ENCODE measurements at regions of chr4 and their contacts with region 1.

Region 1: GRCh38 chr4:88514557-88515511 is 8.7 kb downstream of the PYURF start:
- DNase-seq: peak; percentile 76
- ATAC-seq: peak; percentile 92
- H3K4me3 ChIP-seq: no peak overlapping the region
- H3K27ac ChIP-seq: no peak overlapping the region
- H3K4me1 ChIP-seq: peaks cover 18% of the 10 kb centered on the region
- H3K27me3 ChIP-seq: peaks cover 0 to 2% of the 10 kb centered on the region in 2 experiments; a peak in 1 of 5 replicates
- CTCF ChIP-seq: no peak
- EP300 ChIP-seq: peak in 1 of 2 experiments; percentile 68; a peak in 2 of 4 replicates
- POLR2A ChIP-seq: no peak
- RAD21 ChIP-seq: no peak

Region 2: GRCh38 chr4:88033309-88033708 is 481.5 kb before region 1 on chr4:
- CTCF ChIA-PET with region 1: interaction called, 8 read pairs
- POLR2A ChIA-PET with region 1: no interaction called
- in situ Hi-C with region 1: loop called (anchors 10 kb)
- intact Hi-C with region 1: loop called (anchors 1 kb)
- DNase-seq: peak; percentile 71
- ATAC-seq: peak; percentile 61
- H3K4me3 ChIP-seq: no peak overlapping the region
- H3K27ac ChIP-seq: no peak overlapping the region
- H3K4me1 ChIP-seq: no peaks in the 10 kb centered on the region
- H3K27me3 ChIP-seq: no peaks in the 10 kb centered on the region
- CTCF ChIP-seq: peak; percentile 73
- EP300 ChIP-seq: no peak
- POLR2A ChIP-seq: no peak
- RAD21 ChIP-seq: peak; percentile 69; the same call in 1 of the 2 replicates

Region 3: GRCh38 chr4:88104902-88105610 is 409.8 kb before region 1 on chr4:
- CTCF ChIA-PET with region 1: no interaction called
- POLR2A ChIA-PET with region 1: no interaction called
- in situ Hi-C with region 1: no loop called
- intact Hi-C with region 1: loop called (anchors 5 kb)
- DNase-seq: no peak
- ATAC-seq: no peak
- H3K4me3 ChIP-seq: no peak overlapping the region
- H3K27ac ChIP-seq: peak overlapping the region; percentile 18
- H3K4me1 ChIP-seq: peaks cover 56% of the 10 kb centered on the region
- H3K27me3 ChIP-seq: no peaks in the 10 kb centered on the region
- CTCF ChIP-seq: no peak
- EP300 ChIP-seq: no peak
- POLR2A ChIP-seq: no peak
- RAD21 ChIP-seq: no peak

Region 4: DNA sequence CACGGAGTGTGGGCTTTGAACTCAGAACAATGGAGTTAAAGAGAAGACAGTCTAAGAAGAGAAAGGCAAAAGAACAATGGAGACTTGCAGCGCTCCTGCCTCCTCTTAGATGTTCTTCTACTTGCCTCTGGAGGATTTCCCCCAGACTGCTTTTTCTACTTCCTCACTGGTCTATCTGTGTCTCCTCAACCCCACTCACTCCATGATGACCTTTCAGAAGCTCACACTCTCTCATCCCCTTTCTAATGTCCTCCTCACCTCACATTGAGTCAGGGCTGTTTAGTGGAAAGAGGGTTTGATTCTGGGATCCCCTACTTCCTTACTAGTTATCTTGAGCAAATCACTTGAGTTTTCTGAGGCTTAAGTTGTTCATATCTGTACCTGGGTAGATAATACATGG is 148.4 kb before region 1 on chr4:
- CTCF ChIA-PET with region 1: interaction called, 12 read pairs
- POLR2A ChIA-PET with region 1: no interaction called
- in situ Hi-C with region 1: loop called (anchors 5 kb)
- intact Hi-C with region 1: loop called (anchors 1 kb)
- DNase-seq: no peak
- ATAC-seq: no peak
- H3K4me3 ChIP-seq: no peak overlapping the region
- H3K27ac ChIP-seq: no peak overlapping the region
- H3K4me1 ChIP-seq: no peaks in the 10 kb centered on the region
- H3K27me3 ChIP-seq: peaks cover 0 to 3% of the 10 kb centered on the region in 2 experiments; a peak in 1 of 5 replicates
- CTCF ChIP-seq: no peak
- EP300 ChIP-seq: no peak
- POLR2A ChIP-seq: no peak
- RAD21 ChIP-seq: no peak

Region 5: GRCh38 chr4:88409206-88409605 is 105.6 kb before region 1 on chr4:
- CTCF ChIA-PET with region 1: no interaction called
- POLR2A ChIA-PET with region 1: no interaction called
- in situ Hi-C with region 1: no loop called
- intact Hi-C with region 1: loop called (anchors 1 kb)
- DNase-seq: no peak
- ATAC-seq: no peak
- H3K4me3 ChIP-seq: no peak overlapping the region
- H3K27ac ChIP-seq: no peak overlapping the region
- H3K4me1 ChIP-seq: no peaks in the 10 kb centered on the region
- H3K27me3 ChIP-seq: no peaks in the 10 kb centered on the region
- CTCF ChIP-seq: 0 out of 2 replicates have a peak, but pooled peaks have one; percentile 13
- EP300 ChIP-seq: no peak
- POLR2A ChIP-seq: no peak
- RAD21 ChIP-seq: no peak